Activated CD8-positive, alpha-beta memory T cell treated with anti-CD3 and anti-CD28 coated beads, Interleukin-2, amount 10 ng/mL, durations not matched to agents 7 days and 5 days (primary cell): ENCODE measurements at regions of chr11 and their contacts with region 1.

Region 1: GRCh38 chr11:122743949-122744348 is 88.4 kb downstream of the UBASH3B start:
- DNase-seq: peak; percentile 91
- ATAC-seq: peak; percentile 71
- H3K4me3 Mint-ChIP-seq: no peak overlapping the region
- H3K27ac Mint-ChIP-seq: no peak overlapping the region
- H3K4me1 Mint-ChIP-seq: peaks cover 3% of the 10 kb centered on the region
- H3K27me3 Mint-ChIP-seq: no peaks in the 10 kb centered on the region

Region 2: DNA sequence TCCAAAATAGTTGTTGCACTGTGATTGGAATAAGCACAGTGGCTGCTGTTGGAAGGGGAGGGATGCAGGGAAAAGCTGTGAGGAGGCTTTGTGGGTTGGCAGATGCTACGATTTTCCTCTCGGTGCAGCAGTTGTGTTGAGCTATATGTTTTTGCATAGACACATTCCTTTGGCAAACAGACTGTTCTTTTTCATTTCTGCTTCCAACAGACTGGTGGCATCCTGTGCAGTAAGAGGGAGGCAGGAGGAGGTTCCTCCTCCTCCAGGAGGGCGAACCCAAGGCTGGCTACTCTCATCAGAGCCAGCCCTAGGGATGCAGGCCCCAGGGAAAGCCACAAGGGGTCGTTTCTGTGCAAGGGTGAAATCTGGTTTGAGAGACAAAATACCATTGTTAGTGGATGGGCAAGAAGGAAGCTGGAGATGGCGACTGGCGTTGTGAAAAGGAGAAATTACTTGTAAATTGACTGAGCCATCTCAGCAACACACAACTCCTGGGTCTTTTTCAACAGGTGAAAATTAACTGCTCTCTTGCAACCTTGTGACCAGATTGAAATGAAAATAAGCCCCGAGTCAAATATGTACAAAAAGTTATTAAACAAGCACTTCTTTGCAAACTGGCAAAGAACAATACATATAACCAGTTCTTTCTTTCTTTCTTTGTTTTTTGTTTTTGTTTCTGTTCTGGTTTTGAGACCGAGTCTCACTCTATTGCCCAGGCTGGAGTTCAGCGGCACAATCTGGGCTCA is 115.0 kb before region 1 on chr11:
- CTCF ChIA-PET with region 1: interaction called, 12 read pairs
- DNase-seq: peak; percentile 81
- ATAC-seq: peak; percentile 88
- H3K4me3 Mint-ChIP-seq: no peak overlapping the region
- H3K27ac Mint-ChIP-seq: no peak overlapping the region
- H3K4me1 Mint-ChIP-seq: peaks cover 15% of the 10 kb centered on the region
- H3K27me3 Mint-ChIP-seq: peaks cover 7% of the 10 kb centered on the region

Region 3: DNA sequence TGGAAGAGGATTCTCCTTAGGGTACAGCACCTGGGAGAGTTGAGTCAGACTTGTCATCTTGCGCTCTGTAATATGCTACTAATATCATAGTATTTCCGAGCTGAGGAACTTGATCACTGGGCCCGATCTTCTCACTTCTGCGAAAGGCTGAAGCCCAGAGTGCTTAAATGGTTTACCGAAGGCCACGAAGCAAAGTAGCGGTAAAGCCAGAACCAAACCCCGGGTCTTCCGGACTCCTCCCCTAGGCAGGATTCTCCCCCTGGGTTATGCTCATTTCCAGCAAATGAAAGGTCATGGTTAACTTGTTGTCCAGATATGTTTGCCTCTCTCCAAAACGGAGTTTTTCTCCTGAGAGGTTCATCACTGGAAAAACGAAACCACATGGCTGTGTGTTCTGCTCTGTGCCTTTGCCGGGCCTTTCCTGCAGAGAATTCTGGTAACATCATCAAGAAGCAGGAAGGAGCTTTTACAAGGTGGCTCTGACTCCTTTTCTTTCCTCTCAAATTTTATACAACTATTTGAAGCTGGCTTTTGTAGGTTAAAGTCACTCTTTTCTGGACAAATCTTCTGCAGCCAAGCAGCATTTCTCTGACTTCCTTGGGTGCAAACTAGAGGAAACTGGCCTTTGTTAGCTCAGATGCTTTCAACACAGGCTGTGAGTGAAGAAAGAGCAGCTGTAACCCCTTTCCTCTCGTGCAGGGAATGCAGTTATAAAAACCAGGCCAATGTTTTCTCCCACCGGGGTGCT is 53.0 kb before region 1 on chr11:
- CTCF ChIA-PET with region 1: interaction called, 15 read pairs
- DNase-seq: no peak
- ATAC-seq: peak; percentile 52
- H3K4me3 Mint-ChIP-seq: peak overlapping the region; percentile 54
- H3K27ac Mint-ChIP-seq: peak overlapping the region; percentile 85
- H3K4me1 Mint-ChIP-seq: peaks cover 64% of the 10 kb centered on the region
- H3K27me3 Mint-ChIP-seq: no peaks in the 10 kb centered on the region

Region 4: GRCh38 chr11:122697636-122698167 is 46.2 kb before region 1 on chr11:
- CTCF ChIA-PET with region 1: interaction called, 15 read pairs
- DNase-seq: peak; percentile 70
- ATAC-seq: peak; percentile 87
- H3K4me3 Mint-ChIP-seq: peak overlapping the region; percentile 22
- H3K27ac Mint-ChIP-seq: peak overlapping the region; percentile 87
- H3K4me1 Mint-ChIP-seq: peaks cover 62% of the 10 kb centered on the region
- H3K27me3 Mint-ChIP-seq: no peaks in the 10 kb centered on the region

Region 5: DNA sequence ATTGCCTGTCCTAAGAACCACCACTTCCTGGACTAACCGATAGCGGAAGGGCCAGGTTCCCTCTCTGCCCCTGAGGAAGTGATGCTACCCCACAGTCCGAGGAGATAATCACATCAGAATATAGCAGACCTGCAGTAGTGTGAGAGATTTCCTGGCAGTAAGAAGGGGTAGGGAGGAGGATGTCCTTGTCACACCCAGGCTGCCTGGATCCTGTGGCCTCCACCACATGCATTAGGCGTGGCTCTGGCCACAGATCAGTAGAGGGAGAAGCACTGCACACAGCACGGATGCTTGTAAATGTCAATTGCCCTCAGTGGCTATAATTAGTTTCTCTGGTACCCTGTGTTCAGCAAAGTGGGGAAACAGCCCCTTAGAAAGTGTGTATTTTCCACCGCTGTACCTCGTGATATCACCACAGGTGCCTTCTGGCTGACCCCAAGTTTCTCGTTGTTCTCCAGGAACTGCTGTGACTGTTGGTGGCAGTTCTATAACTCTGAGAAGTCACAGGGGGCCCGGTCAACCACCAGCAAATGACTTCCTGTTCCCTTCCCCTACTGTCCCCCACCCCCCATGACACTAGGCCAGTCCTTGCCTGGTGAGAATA is 26.6 kb before region 1 on chr11:
- CTCF ChIA-PET with region 1: interaction called, 11 read pairs
- DNase-seq: peak; percentile 95
- ATAC-seq: peak; percentile 85
- H3K4me3 Mint-ChIP-seq: peak overlapping the region; percentile 54
- H3K27ac Mint-ChIP-seq: peak overlapping the region; percentile 92
- H3K4me1 Mint-ChIP-seq: peaks cover 89% of the 10 kb centered on the region
- H3K27me3 Mint-ChIP-seq: no peaks in the 10 kb centered on the region

Region 6: DNA sequence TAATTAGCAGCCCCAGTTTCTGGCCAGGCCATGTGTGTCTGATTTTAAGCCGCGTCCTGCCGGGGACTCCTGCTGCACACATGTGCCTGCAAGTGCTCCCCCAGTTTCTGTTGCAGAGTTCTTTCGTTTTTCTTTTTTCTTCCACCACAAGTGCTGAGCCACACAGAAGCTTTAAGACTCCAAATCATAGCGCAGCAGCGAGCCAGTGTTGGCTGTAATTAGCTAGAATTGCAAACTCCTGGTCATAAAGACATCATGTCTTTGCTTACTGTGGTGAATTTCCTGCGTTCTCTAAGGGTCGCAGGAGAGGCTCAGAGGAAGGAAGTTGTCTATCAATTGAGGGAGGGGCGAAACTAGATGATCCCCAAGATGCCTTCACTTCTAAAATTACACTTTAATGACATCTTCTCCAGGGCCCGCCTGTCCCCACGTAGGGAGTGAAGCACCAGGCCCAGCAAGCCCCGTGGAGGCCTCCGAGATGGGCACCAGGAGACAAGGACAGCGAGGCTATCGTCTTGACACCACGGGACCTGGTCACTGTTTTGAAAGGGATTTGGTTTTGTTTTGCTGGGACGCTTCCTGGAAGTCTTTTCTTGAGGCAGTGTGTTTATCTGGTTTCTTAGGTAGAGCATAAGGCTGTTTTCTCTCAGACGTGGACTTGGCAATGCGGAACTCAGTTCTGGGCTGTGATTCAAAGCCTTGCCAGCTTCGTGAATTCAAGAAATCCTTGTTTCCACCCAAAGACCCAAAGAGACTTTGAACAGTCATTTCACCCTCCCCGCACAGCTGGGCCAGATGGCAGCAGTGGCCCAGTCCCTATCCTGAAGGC is 16.6 kb before region 1 on chr11:
- CTCF ChIA-PET with region 1: interaction called, 15 read pairs
- DNase-seq: peak; percentile 76
- ATAC-seq: peak; percentile 77
- H3K4me3 Mint-ChIP-seq: peak overlapping the region; percentile 65
- H3K27ac Mint-ChIP-seq: peak overlapping the region; percentile 96
- H3K4me1 Mint-ChIP-seq: peaks cover 82% of the 10 kb centered on the region
- H3K27me3 Mint-ChIP-seq: no peaks in the 10 kb centered on the region

Region 7: GRCh38 chr11:122814401-122814800 is 70.5 kb after region 1 on chr11:
- CTCF ChIA-PET with region 1: no interaction called
- DNase-seq: no peak
- ATAC-seq: peak; percentile 45
- H3K4me3 Mint-ChIP-seq: no peak overlapping the region
- H3K27ac Mint-ChIP-seq: no peak overlapping the region
- H3K4me1 Mint-ChIP-seq: peaks cover 11% of the 10 kb centered on the region
- H3K27me3 Mint-ChIP-seq: no peaks in the 10 kb centered on the region